Activated T-helper 2 cell treated with anti-CD3 and anti-CD28 coated beads, Interferon-gamma antibody, Interleukin-2, Interleukin-4, amounts not matched to agents 10 μg/mL and 5 μg/mL and 100 μg/mL, durations not matched to agents 14 hours and 24 hours and 36 hours (primary cell): ENCODE measurements at regions of chr1 and their contacts with region 1.

Region 1: DNA sequence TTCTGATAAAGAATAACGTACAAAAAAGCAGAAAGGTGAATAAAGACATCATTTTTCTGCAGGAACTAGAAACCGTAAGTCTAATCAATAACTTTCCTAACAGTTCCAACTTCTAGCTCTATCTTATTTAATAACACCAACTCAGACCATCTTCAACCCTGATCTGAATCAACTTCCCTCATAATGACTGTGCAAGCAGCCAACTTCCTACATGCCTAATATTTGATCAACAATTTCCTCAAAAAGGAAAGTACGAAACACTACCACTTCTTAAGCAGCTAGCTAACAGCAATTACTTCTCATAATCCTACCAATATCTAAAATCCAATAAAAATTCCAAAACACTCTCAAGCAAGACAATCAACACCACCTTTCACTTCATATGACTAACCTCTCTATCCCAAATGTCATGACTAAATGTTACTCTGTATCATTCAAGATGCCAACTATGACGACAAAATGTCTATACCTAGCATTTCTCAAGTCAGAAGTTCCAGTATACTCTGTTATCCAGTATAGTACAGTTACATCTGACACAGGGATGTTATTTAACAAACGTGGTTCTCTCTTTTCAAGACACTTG is 1.7 kb downstream of the COP1 start:
- DNase-seq: no peak
- H3K4me3 Mint-ChIP-seq: peak overlapping the region; percentile 99
- H3K27ac Mint-ChIP-seq: peak overlapping the region; percentile 95
- H3K4me1 Mint-ChIP-seq: peaks cover 27% of the 10 kb centered on the region
- H3K27me3 Mint-ChIP-seq: no peaks in the 10 kb centered on the region

Region 2: DNA sequence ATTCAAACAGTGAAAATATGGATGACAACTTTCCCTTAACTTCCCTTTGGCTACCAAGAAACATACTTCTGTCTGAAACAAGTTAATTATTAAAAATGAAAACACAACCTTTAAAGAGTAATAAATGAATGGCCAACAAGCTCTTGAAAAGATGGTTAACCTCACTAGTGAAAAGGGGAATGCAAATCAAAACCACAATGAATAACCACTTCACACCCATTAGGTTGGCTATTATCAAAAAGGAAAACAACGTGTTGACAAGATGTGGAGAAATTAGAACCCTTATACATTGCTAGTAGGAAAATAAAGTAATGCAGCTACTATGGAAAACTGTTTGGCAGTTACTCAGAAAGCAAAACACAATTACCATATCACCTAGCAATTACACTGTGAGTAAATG is 12.4 kb before region 1 on chr1:
- intact Hi-C with region 1: loop called (anchors 1 kb)
- DNase-seq: no peak
- H3K4me3 Mint-ChIP-seq: no peak overlapping the region
- H3K27ac Mint-ChIP-seq: peak overlapping the region; percentile 35
- H3K4me1 Mint-ChIP-seq: peaks cover 40% of the 10 kb centered on the region
- H3K27me3 Mint-ChIP-seq: no peaks in the 10 kb centered on the region